Activated CD4-positive, alpha-beta T cell treated with anti-CD3 and anti-CD28 coated beads for 36 hours (primary cell): ENCODE measurements at regions of chr4 and their contacts with region 1.

Region 1: GRCh38 chr4:56907489-56908205 is at the start of gene REST:
- DNase-seq: peak; percentile 88
- ATAC-seq: peak; percentile 64
- H3K4me3 Mint-ChIP-seq: peak within 1 kb of the TSS; percentile 73
- H3K27ac Mint-ChIP-seq: peak within 1 kb of the TSS; percentile 72
- H3K4me1 Mint-ChIP-seq: peaks cover 38% of the 10 kb centered on the region
- H3K27me3 Mint-ChIP-seq: no peaks in the 10 kb centered on the region
- total RNA-seq, gene REST: 44.0 to 44.9 TPM

Region 2: DNA sequence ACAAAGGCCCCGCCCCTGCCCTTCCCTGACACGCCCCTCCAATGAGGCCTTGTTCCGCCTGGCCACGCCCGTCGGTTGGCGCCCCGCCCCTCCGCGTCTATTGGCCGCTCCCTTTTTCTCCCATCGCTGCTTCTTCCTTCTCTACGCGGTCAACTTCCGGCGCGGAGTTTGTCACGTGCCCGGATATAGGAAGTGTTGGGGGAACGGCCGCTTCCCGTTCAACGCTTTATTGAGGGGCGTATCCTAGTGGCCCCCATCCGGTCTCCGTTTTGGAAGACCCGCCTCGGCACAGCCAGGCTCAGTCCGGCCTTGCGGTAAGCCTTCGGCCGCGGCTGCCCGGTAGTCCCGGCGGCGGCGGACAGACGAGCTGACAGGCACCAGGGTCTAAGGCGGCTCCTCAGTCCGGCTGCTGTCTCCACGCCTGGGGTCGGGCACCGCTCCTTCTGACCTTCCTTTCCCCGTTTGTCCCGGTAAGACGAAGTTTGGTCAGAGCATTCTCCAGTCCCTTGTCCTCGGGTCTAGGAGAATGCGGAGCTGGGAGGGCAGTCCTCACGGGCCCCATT is 1054.1 kb before region 1 on chr4 and contains the start of gene EXOC1:
- CTCF ChIA-PET with region 1: no interaction called
- POLR2A ChIA-PET with region 1: no interaction called
- intact Hi-C with region 1: loop called in 1 of 2 experiments (anchors 5 kb)
- DNase-seq: peak; percentile 99
- ATAC-seq: peak; percentile 98
- H3K4me3 Mint-ChIP-seq: no peak within 1 kb of the TSS
- H3K27ac Mint-ChIP-seq: peak within 1 kb of the TSS; percentile 83
- H3K4me1 Mint-ChIP-seq: peaks cover 35% of the 10 kb centered on the region
- H3K27me3 Mint-ChIP-seq: no peaks in the 10 kb centered on the region
- total RNA-seq, gene EXOC1: 19.1 to 21.4 TPM

Region 3: GRCh38 chr4:56467284-56468096 is 440.2 kb before region 1 on chr4 and contains the start of gene SRP72:
- CTCF ChIA-PET with region 1: no interaction called
- POLR2A ChIA-PET with region 1: interaction called, 3 read pairs
- intact Hi-C with region 1: loop called (anchors 1 to 2 kb)
- DNase-seq: peak; percentile 94
- ATAC-seq: peak; percentile 92
- H3K4me3 Mint-ChIP-seq: peak within 1 kb of the TSS; percentile 100
- H3K27ac Mint-ChIP-seq: peak within 1 kb of the TSS; percentile 99
- H3K4me1 Mint-ChIP-seq: peaks cover 50% of the 10 kb centered on the region
- H3K27me3 Mint-ChIP-seq: no peaks in the 10 kb centered on the region
- total RNA-seq, gene SRP72: 181 to 204 TPM

Region 4: GRCh38 chr4:56613101-56613862 is 294.4 kb before region 1 on chr4:
- CTCF ChIA-PET with region 1: no interaction called
- POLR2A ChIA-PET with region 1: no interaction called
- intact Hi-C with region 1: no loop called
- DNase-seq: no peak
- ATAC-seq: no peak
- H3K4me3 Mint-ChIP-seq: no peak overlapping the region
- H3K27ac Mint-ChIP-seq: no peak overlapping the region
- H3K4me1 Mint-ChIP-seq: no peaks in the 10 kb centered on the region
- H3K27me3 Mint-ChIP-seq: peaks cover 5% of the 10 kb centered on the region

Region 5: DNA sequence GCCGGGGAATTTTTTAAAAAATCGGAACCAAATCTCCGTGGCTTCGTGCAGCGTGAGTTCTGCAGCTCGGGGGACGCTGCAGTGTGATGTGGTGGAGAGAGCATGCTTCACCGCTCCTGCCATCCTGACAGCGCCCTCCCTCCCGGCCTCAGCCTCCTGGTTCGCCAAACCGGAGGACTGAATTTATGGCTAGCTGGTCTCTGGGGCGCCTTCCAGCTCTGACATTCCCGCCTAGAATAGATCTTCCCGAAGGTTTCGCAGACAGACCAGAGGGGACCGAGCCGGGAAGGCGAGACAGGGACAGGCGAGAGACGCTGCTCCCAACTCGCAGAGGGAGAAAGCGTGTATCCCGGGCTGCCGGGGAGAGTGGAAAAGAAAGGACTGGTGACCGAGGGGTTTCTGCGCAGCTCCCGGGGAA is 252.4 kb before region 1 on chr4:
- CTCF ChIA-PET with region 1: interaction called, 5 read pairs
- POLR2A ChIA-PET with region 1: no interaction called
- intact Hi-C with region 1: loop called in 1 of 2 experiments (anchors 5 kb)
- DNase-seq: peak; percentile 43
- ATAC-seq: no peak
- H3K4me3 Mint-ChIP-seq: peak overlapping the region; percentile 86
- H3K27ac Mint-ChIP-seq: peak overlapping the region; percentile 66
- H3K4me1 Mint-ChIP-seq: peaks cover 61% of the 10 kb centered on the region
- H3K27me3 Mint-ChIP-seq: peaks cover 18% of the 10 kb centered on the region

Region 6: DNA sequence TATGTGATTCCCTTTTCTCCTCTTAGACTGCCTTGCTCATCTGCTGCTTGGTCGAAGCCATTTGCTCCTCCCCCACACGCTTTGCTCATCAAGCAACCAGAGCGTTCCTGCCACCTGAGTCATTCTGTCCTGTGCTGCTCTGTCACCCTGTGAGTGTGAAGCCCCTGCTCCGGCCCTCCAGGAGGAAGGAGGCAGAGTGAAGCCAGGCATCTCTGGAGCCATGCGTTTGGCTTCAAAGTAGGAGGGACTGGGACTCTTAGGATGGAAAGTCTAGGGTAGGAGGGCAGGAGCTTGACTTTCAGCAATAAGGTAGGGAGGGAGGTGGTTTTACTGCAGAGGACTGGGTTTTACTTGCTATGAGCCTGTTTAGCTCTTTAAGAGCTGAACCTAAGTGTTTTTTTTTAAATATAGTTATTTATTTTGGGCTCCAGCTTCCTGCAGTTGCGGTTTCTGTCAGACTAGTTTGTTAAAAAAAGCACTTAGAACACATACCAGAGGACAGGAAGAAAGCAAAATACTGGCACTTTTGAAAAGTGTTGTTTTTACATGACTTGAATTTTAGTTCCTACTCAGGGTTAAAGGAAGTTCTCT is 149.7 kb before region 1 on chr4:
- CTCF ChIA-PET with region 1: no interaction called
- POLR2A ChIA-PET with region 1: no interaction called
- intact Hi-C with region 1: loop called in 1 of 2 experiments (anchors 5 kb)
- DNase-seq: peak; percentile 92
- ATAC-seq: peak; percentile 98
- H3K4me3 Mint-ChIP-seq: peak overlapping the region; percentile 49
- H3K27ac Mint-ChIP-seq: peak overlapping the region; percentile 91
- H3K4me1 Mint-ChIP-seq: peaks cover 59% of the 10 kb centered on the region
- H3K27me3 Mint-ChIP-seq: no peaks in the 10 kb centered on the region

Region 7: DNA sequence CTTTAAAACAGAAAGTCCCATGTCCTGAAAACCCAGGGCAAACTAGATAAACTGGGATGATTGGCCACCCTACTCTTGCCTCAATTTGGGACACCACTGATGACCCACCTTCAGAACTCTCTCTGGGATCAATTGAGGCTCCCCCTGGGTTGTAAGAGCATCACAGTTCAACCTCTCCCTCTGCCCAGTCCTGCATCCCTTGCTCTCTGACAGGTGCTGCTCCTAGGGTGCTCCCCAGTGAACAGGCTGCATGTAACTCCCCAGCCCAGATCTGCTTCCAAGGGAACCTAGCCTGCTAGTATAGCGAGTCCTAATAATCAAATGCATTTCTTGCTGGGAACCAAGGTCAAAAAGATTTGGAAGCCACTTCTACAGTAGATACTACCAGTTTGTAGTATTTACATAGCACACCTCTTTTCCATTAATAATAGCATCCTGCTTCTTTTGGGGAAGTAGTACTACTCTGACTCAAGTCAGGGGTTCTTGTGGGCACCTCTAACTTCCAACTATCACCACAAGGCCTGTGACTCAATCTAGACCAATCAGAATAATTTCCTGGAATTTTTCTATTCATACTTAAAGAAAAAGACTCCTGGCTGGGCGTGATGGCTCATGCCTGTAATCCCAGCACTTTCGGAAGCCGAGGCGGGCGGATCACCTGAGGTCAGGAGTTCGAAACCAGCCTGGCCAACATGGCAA is 44.1 kb before region 1 on chr4:
- CTCF ChIA-PET with region 1: no interaction called
- POLR2A ChIA-PET with region 1: no interaction called
- intact Hi-C with region 1: loop called in 1 of 2 experiments (anchors 5 kb)
- DNase-seq: peak; percentile 22
- ATAC-seq: peak; percentile 74
- H3K4me3 Mint-ChIP-seq: no peak overlapping the region
- H3K27ac Mint-ChIP-seq: no peak overlapping the region
- H3K4me1 Mint-ChIP-seq: peaks cover 7% of the 10 kb centered on the region
- H3K27me3 Mint-ChIP-seq: no peaks in the 10 kb centered on the region